Ascending aorta (tissue), 2 donors: ENCODE measurements at regions of chr17 and their contacts with region 1.

Region 1: GRCh38 chr17:13594762-13595598 is 6.7 kb downstream of the HS3ST3A1 start:
- DNase-seq: peak in 1 of 2 donors; percentile 82
- H3K4me3 ChIP-seq: no peak overlapping the region
- H3K27ac ChIP-seq: no peak overlapping the region
- H3K4me1 ChIP-seq: no peaks in the 10 kb centered on the region
- H3K27me3 ChIP-seq: no peaks in the 10 kb centered on the region
- CTCF ChIP-seq: peak; percentile 74 to 87 (median 77)

Region 2: DNA sequence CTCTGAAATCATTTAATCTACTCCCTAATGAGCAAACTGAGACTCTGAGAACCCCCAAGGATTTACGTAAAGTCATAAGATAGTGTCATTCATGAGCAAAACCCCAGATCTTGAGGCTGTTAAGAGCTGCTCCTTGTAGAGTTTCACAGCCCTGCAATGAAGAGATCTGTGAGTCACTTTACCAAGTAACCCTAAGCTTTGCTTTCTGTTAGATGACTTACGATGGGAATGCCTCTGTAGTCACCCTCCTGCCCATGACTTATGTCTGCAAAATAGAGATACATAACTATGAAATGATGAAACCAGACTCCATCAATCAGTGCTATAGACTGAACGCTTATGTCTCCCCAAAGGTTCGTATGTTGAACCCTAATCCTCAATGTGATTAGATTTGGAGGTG is 111.0 kb before region 1 on chr17:
- intact Hi-C with region 1: no loop called
- DNase-seq: no peak
- H3K4me3 ChIP-seq: no peak overlapping the region
- H3K27ac ChIP-seq: no peak overlapping the region
- H3K4me1 ChIP-seq: no peaks in the 10 kb centered on the region
- H3K27me3 ChIP-seq: no peaks in the 10 kb centered on the region
- CTCF ChIP-seq: no peak

Region 3: DNA sequence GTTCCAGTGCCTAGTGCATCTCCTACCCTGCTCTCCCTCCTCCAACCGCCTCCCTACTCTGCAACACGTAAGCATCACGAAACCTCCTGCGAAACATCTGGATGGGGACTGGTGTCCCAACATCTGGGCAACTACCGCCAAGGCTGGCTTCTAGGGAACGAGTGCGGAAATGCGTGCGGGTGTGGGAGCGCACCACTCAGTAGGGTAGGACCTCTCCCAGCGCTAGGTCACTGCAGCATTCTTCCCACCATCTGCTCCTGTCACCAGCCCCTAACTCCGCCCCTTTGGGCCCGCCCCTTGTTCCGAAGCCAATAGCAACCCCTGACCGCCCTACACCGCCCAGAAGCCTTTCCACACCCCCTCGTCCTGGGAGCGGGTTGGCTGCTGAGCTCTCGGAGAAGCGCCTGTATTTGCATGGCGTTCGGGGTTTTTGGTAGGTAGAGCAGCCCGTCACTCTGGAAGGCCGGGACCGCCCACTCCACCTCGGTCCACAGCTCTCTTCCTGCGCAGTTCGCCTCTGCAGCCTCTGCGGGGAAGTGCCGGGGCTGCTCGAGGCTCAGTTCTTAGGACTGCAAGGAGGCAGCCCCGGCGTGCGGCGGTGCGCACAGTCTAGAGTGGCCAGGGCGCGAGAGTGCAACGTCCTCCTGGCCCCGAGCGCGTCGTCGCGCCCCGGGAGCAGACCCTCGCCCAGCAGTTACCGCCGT is 705.7 kb after region 1 on chr17 and contains the start of gene HS3ST3B1:
- intact Hi-C with region 1: loop called (anchors 1 kb)
- DNase-seq: peak; percentile 95 to 97
- H3K4me3 ChIP-seq: peak within 1 kb of the TSS; percentile 80 to 86
- H3K27ac ChIP-seq: peak within 1 kb of the TSS; percentile 51 to 65
- H3K4me1 ChIP-seq: peaks cover 14 to 22% of the 10 kb centered on the region in 2 donors
- H3K27me3 ChIP-seq: peaks cover 18% of the 10 kb centered on the region
- CTCF ChIP-seq: no peak
- total RNA-seq, gene HS3ST3B1: 14.6 TPM

Region 4: GRCh38 chr17:14926526-14927122 is 1331.6 kb after region 1 on chr17:
- intact Hi-C with region 1: loop called (anchors 5 kb)
- DNase-seq: no peak
- H3K4me3 ChIP-seq: no peak overlapping the region
- H3K27ac ChIP-seq: no peak overlapping the region
- H3K4me1 ChIP-seq: no peaks in the 10 kb centered on the region
- H3K27me3 ChIP-seq: no peaks in the 10 kb centered on the region
- CTCF ChIP-seq: peak in 2 of 3 experiments; percentile 55 to 69